ENCODE measurements at regions of chr22 and their contacts with region 1.

Region 1: GRCh38 chr22:21807544-21808529 is 59.6 kb downstream of the MAPK1 start:
- DNase-seq: no peak
- H3K4me3 ChIP-seq: no peak overlapping the region
- CTCF ChIP-seq: no peak

Region 2: DNA sequence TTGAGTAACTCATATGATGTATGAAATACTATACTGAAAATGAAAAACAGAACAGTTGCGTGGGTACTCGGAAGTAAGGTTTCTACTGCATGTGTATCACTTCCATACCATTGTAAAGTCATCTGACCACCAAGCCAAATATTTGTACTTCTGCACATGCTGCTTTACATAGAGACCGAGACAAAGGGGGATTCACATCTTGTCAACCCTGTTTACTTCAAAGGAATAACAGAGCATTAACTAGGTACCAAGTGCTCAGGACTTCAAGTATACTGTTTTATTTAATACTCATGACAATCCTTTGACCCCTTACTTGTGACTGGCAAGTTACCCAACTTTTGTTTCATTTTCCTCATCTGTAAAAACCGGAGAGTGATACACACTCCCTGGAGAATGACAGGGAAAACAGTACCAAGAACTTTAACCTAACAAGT is 49.7 kb after region 1 on chr22:
- in situ Hi-C with region 1: loop called (anchors 5 kb)
- DNase-seq: no peak
- H3K4me3 ChIP-seq: no peak overlapping the region
- CTCF ChIP-seq: no peak

Region 3: GRCh38 chr22:21921729-21922128 is 113.9 kb after region 1 on chr22:
- in situ Hi-C with region 1: loop called (anchors 10 kb)
- DNase-seq: no peak
- H3K4me3 ChIP-seq: no peak overlapping the region
- CTCF ChIP-seq: no peak

Region 4: DNA sequence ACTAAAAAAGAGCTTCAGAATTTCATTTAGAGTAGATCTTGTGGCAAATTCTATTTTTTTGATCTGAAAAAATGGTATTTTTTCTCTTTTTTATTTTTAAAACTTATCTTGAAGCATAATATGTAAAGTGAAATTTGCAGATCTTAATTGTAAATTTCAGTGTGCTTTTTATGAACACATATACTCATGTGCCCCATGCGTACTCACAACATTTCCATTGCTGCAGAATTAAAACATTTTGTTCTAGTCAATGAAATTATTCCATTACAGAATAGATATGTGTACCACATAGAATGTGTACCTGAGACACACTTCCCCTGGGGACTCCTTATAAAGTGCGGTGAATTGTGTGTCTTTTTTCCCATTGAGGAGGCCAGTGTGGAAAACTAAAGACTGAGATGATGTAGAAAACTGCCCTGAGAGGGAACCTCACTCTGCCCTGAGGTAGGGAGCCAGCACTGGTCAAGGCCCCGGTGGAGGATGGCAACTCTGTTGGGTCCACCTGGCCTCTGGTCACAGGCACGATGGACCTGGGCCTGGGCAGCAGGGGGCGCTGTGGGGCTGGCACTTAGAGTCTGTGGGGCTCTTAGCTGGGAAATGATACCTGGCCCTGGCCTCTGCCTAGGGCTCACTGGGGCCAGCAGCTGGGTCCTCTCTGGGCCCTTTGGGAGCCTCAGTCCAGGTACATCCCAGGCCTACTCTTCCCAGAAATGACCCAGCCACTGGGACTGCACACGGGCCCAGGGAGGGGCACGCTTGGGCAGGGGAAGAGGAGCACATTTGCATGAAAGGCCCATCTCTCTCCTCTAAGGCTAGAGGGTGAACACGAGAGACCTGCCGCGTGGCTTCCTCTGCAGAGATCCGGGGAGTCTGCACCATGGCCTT is 252.6 kb after region 1 on chr22:
- in situ Hi-C with region 1: no loop called
- DNase-seq: no peak
- H3K4me3 ChIP-seq: no peak overlapping the region
- CTCF ChIP-seq: peak; percentile 61

Measured in astrocyte of the cerebellum (primary cell).